Posterior cingulate gyrus (tissue), 11 donors: ENCODE measurements at regions of chr20 and their contacts with region 1.

Region 1: DNA sequence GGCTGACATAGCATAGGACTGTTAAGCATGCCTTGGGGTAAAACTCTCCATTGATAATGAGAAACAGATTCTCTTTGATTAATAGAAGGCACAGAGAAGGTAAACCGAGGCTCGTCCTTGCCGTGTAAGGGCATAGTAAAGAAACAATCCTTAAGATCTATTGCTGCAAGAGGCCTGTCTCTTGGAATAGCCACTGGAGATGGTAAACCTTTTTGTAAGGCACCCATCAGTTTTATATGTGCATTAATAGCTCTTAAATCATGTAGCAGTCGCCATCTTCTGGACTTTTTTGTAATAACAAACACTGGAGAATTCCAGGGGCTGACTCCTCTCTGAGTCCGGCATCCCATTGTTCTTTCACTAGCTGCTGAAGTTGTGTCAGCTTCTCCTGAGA is 8.4 kb upstream of the ABHD12 start:
- DNase-seq: peak in 4 of 10 donors; percentile 17 to 77 (median 33)

Region 2: GRCh38 chr20:25247956-25248785 is 150.9 kb before region 1 on chr20 and contains the start of gene PYGB:
- intact Hi-C with region 1: loop called (anchors 5 kb)
- DNase-seq: peak; percentile 70 to 97 (median 78)

Region 3: GRCh38 chr20:25294459-25295385 is 104.3 kb before region 1 on chr20:
- intact Hi-C with region 1: loop called (anchors 1 kb)
- DNase-seq: peak in 9 of 10 donors; percentile 49 to 95 (median 76)

Region 4: GRCh38 chr20:25336561-25337422 is 62.2 kb before region 1 on chr20:
- intact Hi-C with region 1: loop called (anchors 2 kb)
- DNase-seq: peak in 1 of 10 donors; percentile 60